CD4-positive, alpha-beta T cell (primary cell): ENCODE measurements at regions of chr10 and their contacts with region 1.

Region 1: DNA sequence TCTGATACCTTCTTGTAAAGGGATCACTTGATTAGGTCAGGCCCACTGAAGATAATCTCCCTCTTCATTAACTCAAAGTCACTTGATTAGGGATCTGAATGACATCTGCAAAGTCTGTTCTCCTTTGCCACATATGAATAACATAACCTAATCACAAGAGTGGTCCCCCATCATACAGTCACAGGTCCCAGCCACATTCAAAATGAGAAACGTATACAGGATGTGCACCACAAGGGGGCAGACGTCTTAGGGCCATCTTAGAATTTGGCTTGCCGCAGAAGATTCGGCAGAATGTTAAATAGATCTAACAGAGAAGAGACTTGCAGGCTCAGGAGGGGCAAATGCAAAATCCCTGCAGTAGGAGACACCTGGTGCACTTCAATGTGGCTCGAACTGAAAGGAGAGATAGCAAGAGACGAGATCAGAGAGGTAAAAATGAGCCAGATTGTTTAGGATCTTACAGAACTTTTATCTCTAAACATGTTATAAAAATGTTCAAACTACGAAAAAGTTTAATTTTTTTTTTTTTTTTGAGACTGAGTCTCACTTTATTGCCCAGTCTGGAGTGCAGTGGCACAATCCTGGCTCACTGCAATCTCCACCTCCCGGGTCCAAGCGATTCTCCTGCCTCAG is 10.4 kb upstream of the SMC3 start:
- DNase-seq: peak; percentile 42 to 86 (median 60)
- ATAC-seq: peak; percentile 98
- H3K4me3 ChIP-seq: no peak overlapping the region
- H3K4me3 Mint-ChIP-seq: no peak overlapping the region
- H3K27ac ChIP-seq: no peak overlapping the region
- H3K27ac Mint-ChIP-seq: no peak overlapping the region
- H3K4me1 ChIP-seq: peaks cover 5% of the 10 kb centered on the region
- H3K4me1 Mint-ChIP-seq: peaks cover 4% of the 10 kb centered on the region
- H3K27me3 ChIP-seq: peaks cover 0 to 4% of the 10 kb centered on the region in 2 experiments
- H3K27me3 Mint-ChIP-seq: peaks cover 5% of the 10 kb centered on the region
- CTCF ChIP-seq: peak; percentile 85

Region 2: GRCh38 chr10:110758898-110759297 is 201.8 kb after region 1 on chr10:
- CTCF ChIA-PET with region 1: no interaction called
- POLR2A ChIA-PET with region 1: no interaction called
- intact Hi-C with region 1: no loop called
- DNase-seq: no peak
- ATAC-seq: no peak
- H3K4me3 ChIP-seq: no peak overlapping the region
- H3K4me3 Mint-ChIP-seq: no peak overlapping the region
- H3K27ac ChIP-seq: no peak overlapping the region
- H3K27ac Mint-ChIP-seq: no peak overlapping the region
- H3K4me1 ChIP-seq: no peaks in the 10 kb centered on the region
- H3K4me1 Mint-ChIP-seq: peaks cover 13% of the 10 kb centered on the region
- H3K27me3 ChIP-seq: no peaks in the 10 kb centered on the region
- H3K27me3 Mint-ChIP-seq: no peaks in the 10 kb centered on the region
- CTCF ChIP-seq: no peak

Region 3: GRCh38 chr10:112137154-112137987 is 1580.3 kb after region 1 on chr10:
- CTCF ChIA-PET with region 1: no interaction called
- POLR2A ChIA-PET with region 1: no interaction called
- intact Hi-C with region 1: loop called (anchors 2 to 5 kb)
- DNase-seq: peak; percentile 32 to 66 (median 47)
- ATAC-seq: peak; percentile 46
- H3K4me3 ChIP-seq: no peak overlapping the region
- H3K4me3 Mint-ChIP-seq: no peak overlapping the region
- H3K27ac ChIP-seq: no peak overlapping the region
- H3K27ac Mint-ChIP-seq: no peak overlapping the region
- H3K4me1 ChIP-seq: peaks cover 4% of the 10 kb centered on the region
- H3K4me1 Mint-ChIP-seq: no peaks in the 10 kb centered on the region
- H3K27me3 ChIP-seq: no peaks in the 10 kb centered on the region
- H3K27me3 Mint-ChIP-seq: no peaks in the 10 kb centered on the region
- CTCF ChIP-seq: peak; percentile 77